ENCODE measurements at regions of chr7 and their contacts with region 1.

Region 1: GRCh38 chr7:2802504-2803341 is 41.4 kb downstream of the GNA12 start:
- DNase-seq: no peak
- H3K4me3 Mint-ChIP-seq: peak overlapping the region; percentile 53
- H3K27ac Mint-ChIP-seq: peak overlapping the region; percentile 33
- H3K4me1 Mint-ChIP-seq: peaks cover 52% of the 10 kb centered on the region
- H3K27me3 Mint-ChIP-seq: no peaks in the 10 kb centered on the region
- CTCF ChIP-seq: no peak

Region 2: GRCh38 chr7:2837496-2837895 is 34.8 kb after region 1 on chr7:
- CTCF ChIA-PET with region 1: interaction called, 14 read pairs
- intact Hi-C with region 1: no loop called
- DNase-seq: no peak
- H3K4me3 Mint-ChIP-seq: no peak overlapping the region
- H3K27ac Mint-ChIP-seq: no peak overlapping the region
- H3K4me1 Mint-ChIP-seq: peaks cover 34% of the 10 kb centered on the region
- H3K27me3 Mint-ChIP-seq: no peaks in the 10 kb centered on the region
- CTCF ChIP-seq: no peak

Measured in Calu3 (cell line).